ENCODE measurements at regions of chrX and their contacts with region 1.

Region 1: DNA sequence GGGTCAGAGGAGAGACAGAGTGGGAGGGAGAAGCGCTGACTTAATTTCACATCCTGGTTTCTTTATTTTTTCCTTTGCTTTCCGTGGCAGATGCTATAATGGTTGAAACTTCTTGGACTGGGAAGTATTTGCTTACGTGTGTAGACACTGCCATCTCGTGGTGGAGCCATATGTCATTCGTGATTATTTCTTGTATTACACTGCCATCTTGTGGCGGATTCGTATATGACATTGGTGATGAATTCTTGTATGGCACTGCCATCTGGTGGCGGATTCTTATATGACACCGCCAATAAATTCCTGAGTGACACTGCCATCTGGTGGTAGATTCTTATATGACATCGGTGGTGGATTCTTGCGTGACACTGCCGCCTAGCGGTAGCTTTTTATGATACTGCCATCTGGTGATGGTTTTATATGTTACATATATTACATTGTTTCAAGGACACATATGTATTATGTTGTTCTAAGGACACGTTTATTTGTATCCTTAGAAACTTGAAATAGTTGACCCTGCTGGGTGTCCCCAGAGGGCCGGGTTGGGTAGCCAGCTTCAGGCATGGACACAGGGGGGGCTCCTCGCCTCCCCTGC is 37.3 kb upstream of the CLCN4 start:
- DNase-seq: peak; percentile 73
- ATAC-seq: peak; percentile 60
- H3K4me3 ChIP-seq: no peak overlapping the region
- H3K27ac ChIP-seq: no peak overlapping the region
- H3K4me1 ChIP-seq: peaks cover 31% of the 10 kb centered on the region
- H3K27me3 ChIP-seq: no peaks in the 10 kb centered on the region
- CTCF ChIP-seq: peak; percentile 98 to 100 (median 100)
- EP300 ChIP-seq: no peak
- POLR2A ChIP-seq: no peak
- RAD21 ChIP-seq: peak; percentile 89

Region 2: DNA sequence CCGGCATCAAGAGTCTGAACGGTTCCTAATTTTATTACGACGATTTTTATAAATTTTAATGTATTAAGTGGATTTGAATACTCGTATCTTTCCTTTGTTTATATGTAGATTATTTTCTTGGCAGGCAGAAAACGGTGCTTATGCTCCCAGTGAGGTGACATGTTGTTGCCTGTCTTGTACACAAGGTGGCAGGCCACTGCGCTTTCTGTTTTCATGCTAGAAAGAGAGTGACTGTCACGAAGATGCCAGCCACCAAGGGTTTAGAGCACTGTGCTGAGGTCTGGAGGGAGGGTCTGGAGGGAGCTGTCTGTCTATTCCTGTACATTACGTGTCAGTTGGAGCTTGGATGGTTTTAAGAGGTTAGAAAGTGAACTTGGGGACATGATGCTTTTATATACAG is 245.5 kb before region 1 on chrX:
- CTCF ChIA-PET with region 1: interaction called, 34 read pairs
- POLR2A ChIA-PET with region 1: no interaction called
- RAD21 ChIA-PET with region 1: interaction called, 6 read pairs
- SMC1A ChIA-PET with region 1: interaction called, 5 read pairs
- in situ Hi-C with region 1: loop called (anchors 5 kb)
- intact Hi-C with region 1: loop called (anchors 1 kb)
- DNase-seq: no peak
- ATAC-seq: peak; percentile 99
- H3K4me3 ChIP-seq: no peak overlapping the region
- H3K27ac ChIP-seq: no peak overlapping the region
- H3K4me1 ChIP-seq: no peaks in the 10 kb centered on the region
- H3K27me3 ChIP-seq: peaks cover 0 to 1% of the 10 kb centered on the region in 2 experiments; a peak in 1 of 4 replicates
- CTCF ChIP-seq: peak; percentile 68 to 77 (median 75)
- EP300 ChIP-seq: no peak
- POLR2A ChIP-seq: no peak
- RAD21 ChIP-seq: peak; percentile 59

Region 3: GRCh38 chrX:9988762-9989161 is 130.7 kb before region 1 on chrX:
- CTCF ChIA-PET with region 1: interaction called, 412 read pairs
- POLR2A ChIA-PET with region 1: interaction called, 3 read pairs
- RAD21 ChIA-PET with region 1: interaction called, 424 read pairs
- SMC1A ChIA-PET with region 1: interaction called, 281 read pairs
- in situ Hi-C with region 1: no loop called
- intact Hi-C with region 1: no loop called
- DNase-seq: no peak
- ATAC-seq: peak; percentile 52
- H3K4me3 ChIP-seq: no peak overlapping the region
- H3K27ac ChIP-seq: no peak overlapping the region
- H3K4me1 ChIP-seq: no peaks in the 10 kb centered on the region
- H3K27me3 ChIP-seq: no peaks in the 10 kb centered on the region
- CTCF ChIP-seq: peak; percentile 43 to 71 (median 44); a peak in 4 of 6 replicates
- EP300 ChIP-seq: no peak
- POLR2A ChIP-seq: no peak
- RAD21 ChIP-seq: peak; percentile 69

Region 4: GRCh38 chrX:10039821-10040793 is 79.4 kb before region 1 on chrX:
- CTCF ChIA-PET with region 1: interaction called, 18 read pairs
- POLR2A ChIA-PET with region 1: no interaction called
- RAD21 ChIA-PET with region 1: interaction called, 3 read pairs
- SMC1A ChIA-PET with region 1: interaction called, 3 read pairs
- in situ Hi-C with region 1: no loop called
- intact Hi-C with region 1: no loop called
- DNase-seq: no peak
- ATAC-seq: no peak
- H3K4me3 ChIP-seq: no peak overlapping the region
- H3K27ac ChIP-seq: no peak overlapping the region
- H3K4me1 ChIP-seq: no peaks in the 10 kb centered on the region
- H3K27me3 ChIP-seq: no peaks in the 10 kb centered on the region; a peak in 1 of 4 replicates
- CTCF ChIP-seq: no peak
- EP300 ChIP-seq: no peak
- POLR2A ChIP-seq: no peak
- RAD21 ChIP-seq: no peak

Region 5: GRCh38 chrX:10077425-10078188 is 41.9 kb before region 1 on chrX:
- CTCF ChIA-PET with region 1: interaction called, 65 read pairs
- POLR2A ChIA-PET with region 1: interaction called, 4 read pairs
- RAD21 ChIA-PET with region 1: interaction called, 89 read pairs
- SMC1A ChIA-PET with region 1: interaction called, 206 read pairs
- in situ Hi-C with region 1: no loop called
- intact Hi-C with region 1: loop called (anchors 2 kb)
- DNase-seq: no peak
- ATAC-seq: peak; percentile 48; the same call in 2 of the 3 replicates
- H3K4me3 ChIP-seq: no peak overlapping the region
- H3K27ac ChIP-seq: no peak overlapping the region
- H3K4me1 ChIP-seq: peaks cover 4% of the 10 kb centered on the region
- H3K27me3 ChIP-seq: no peaks in the 10 kb centered on the region
- CTCF ChIP-seq: 0 out of 6 replicates have a peak, but pooled peaks of 1 of the 3 experiments have one; percentile 2
- EP300 ChIP-seq: no peak
- POLR2A ChIP-seq: no peak
- RAD21 ChIP-seq: peak; percentile 23; the same call in 1 of the 2 replicates

Region 6: GRCh38 chrX:10156199-10157031 is 36.9 kb after region 1 on chrX and contains the start of gene CLCN4:
- CTCF ChIA-PET with region 1: interaction called, 14 read pairs
- POLR2A ChIA-PET with region 1: no interaction called
- RAD21 ChIA-PET with region 1: interaction called, 3 read pairs
- SMC1A ChIA-PET with region 1: interaction called, 4 read pairs
- in situ Hi-C with region 1: no loop called
- intact Hi-C with region 1: no loop called
- DNase-seq: no peak
- ATAC-seq: peak; percentile 87
- H3K4me3 ChIP-seq: peak within 1 kb of the TSS; percentile 41; the same call in 1 of the 2 replicates
- H3K27ac ChIP-seq: no peak within 1 kb of the TSS
- H3K4me1 ChIP-seq: no peaks in the 10 kb centered on the region; the same call in 1 of the 2 replicates
- H3K27me3 ChIP-seq: peaks cover 2 to 15% of the 10 kb centered on the region in 2 experiments
- CTCF ChIP-seq: no peak
- EP300 ChIP-seq: no peak
- POLR2A ChIP-seq: no peak
- RAD21 ChIP-seq: no peak
- polyA plus RNA-seq, gene CLCN4: 0.90 to 1.1 TPM

Region 7: DNA sequence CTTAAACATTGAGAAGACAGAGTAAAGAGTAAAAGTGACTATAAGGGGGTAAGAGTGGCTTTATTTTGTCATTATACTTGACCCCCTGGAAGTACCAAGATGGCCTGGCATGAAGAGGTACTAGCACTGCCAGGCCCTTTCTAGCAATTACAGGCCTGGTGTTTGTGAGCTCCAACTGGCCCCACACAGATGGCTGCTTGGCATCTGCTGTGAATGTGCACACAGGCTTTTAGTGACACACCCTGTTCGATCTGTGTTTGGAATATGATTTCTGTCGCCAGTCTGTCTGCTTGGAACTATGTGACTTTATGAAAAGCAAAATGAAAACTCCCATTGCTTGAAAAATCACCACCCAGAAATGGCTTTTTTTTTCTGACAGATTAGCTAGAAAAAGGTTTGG is 160.6 kb after region 1 on chrX:
- CTCF ChIA-PET with region 1: no interaction called
- POLR2A ChIA-PET with region 1: no interaction called
- RAD21 ChIA-PET with region 1: no interaction called
- SMC1A ChIA-PET with region 1: no interaction called
- in situ Hi-C with region 1: no loop called
- intact Hi-C with region 1: no loop called
- DNase-seq: no peak
- ATAC-seq: no peak
- H3K4me3 ChIP-seq: no peak overlapping the region
- H3K27ac ChIP-seq: no peak overlapping the region
- H3K4me1 ChIP-seq: no peaks in the 10 kb centered on the region
- H3K27me3 ChIP-seq: no peaks in the 10 kb centered on the region; a peak in 1 of 4 replicates
- CTCF ChIP-seq: no peak
- EP300 ChIP-seq: no peak
- POLR2A ChIP-seq: no peak
- RAD21 ChIP-seq: no peak

Region 8: DNA sequence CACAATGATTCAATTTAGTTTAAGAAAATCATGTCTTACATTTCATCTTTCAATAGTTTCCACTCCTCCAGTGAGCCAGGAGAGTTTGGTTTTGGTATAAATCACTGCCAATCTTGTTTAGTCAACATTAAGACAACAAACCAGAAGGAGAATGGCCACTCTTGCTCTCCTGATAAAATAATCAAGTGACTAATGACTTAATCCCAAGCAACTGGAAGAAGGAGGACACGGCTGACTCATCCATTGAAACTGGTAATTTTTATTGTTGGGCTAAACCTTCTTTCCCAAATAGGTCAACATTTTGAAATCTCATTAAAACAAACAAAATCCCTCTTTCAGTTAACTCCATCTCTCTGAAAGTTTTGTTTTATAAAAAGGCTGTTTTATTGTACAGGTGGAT is 267.5 kb after region 1 on chrX:
- CTCF ChIA-PET with region 1: no interaction called
- POLR2A ChIA-PET with region 1: no interaction called
- RAD21 ChIA-PET with region 1: no interaction called
- SMC1A ChIA-PET with region 1: no interaction called
- in situ Hi-C with region 1: no loop called
- intact Hi-C with region 1: no loop called
- DNase-seq: no peak
- ATAC-seq: no peak
- H3K4me3 ChIP-seq: no peak overlapping the region
- H3K27ac ChIP-seq: no peak overlapping the region
- H3K4me1 ChIP-seq: no peaks in the 10 kb centered on the region
- H3K27me3 ChIP-seq: no peaks in the 10 kb centered on the region; a peak in 1 of 4 replicates
- CTCF ChIP-seq: no peak
- EP300 ChIP-seq: no peak
- POLR2A ChIP-seq: no peak
- RAD21 ChIP-seq: no peak

Measured in GM12878 (cell line).